ENCODE measurements at regions of chr6 and their contacts with region 1.

Region 1: DNA sequence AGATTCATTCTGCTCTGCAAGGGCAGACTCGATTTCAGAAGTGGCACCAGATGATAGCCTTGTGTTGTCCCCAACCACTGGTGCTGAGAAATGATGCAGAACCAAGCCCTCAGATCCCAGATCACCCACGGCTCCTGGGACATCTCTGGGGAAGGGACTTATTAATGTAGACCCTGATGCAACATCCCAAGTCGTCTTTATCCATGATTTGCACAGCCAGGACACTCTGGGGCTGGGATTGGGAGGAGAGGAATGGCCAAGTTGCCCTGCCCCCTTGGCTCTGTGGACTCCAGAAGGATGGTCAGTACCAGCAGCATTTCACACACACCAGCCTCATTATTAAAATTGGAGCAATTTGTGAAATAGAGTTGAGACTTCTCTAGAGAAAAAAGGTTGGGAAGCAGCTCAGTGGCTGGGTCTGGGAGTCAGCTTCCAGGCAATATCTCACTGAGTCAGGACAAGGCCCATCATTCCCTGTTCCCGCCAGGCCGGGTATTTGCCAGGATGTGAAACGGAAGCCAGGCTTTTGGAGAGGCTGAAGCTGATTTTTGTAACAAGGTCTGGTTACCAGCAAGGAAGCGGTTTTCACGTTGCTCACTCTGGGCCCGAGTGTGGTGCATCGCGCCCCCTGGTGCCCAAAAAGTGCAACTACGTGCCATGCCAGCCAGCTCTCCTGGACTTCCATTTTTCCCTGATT is 67.4 kb downstream of the ZBTB2 start:
- DNase-seq: peak; percentile 94
- H3K4me3 ChIP-seq: no peak overlapping the region
- H3K27ac ChIP-seq: peak overlapping the region; percentile 80
- H3K4me1 ChIP-seq: peaks cover 26% of the 10 kb centered on the region
- H3K27me3 ChIP-seq: no peaks in the 10 kb centered on the region
- CTCF ChIP-seq: peak; percentile 94 to 97
- POLR2A ChIP-seq: peak; percentile 28

Region 2: GRCh38 chr6:150813319-150813992 is 510.5 kb before region 1 on chr6:
- CTCF ChIA-PET with region 1: interaction called, 17 read pairs
- POLR2A ChIA-PET with region 1: no interaction called
- dilution Hi-C with region 1: no loop called
- intact Hi-C with region 1: no loop called
- DNase-seq: no peak
- H3K4me3 ChIP-seq: no peak overlapping the region
- H3K27ac ChIP-seq: peak overlapping the region; percentile 12
- H3K4me1 ChIP-seq: peaks cover 10% of the 10 kb centered on the region
- H3K27me3 ChIP-seq: no peaks in the 10 kb centered on the region
- CTCF ChIP-seq: no peak
- POLR2A ChIP-seq: no peak

Region 3: DNA sequence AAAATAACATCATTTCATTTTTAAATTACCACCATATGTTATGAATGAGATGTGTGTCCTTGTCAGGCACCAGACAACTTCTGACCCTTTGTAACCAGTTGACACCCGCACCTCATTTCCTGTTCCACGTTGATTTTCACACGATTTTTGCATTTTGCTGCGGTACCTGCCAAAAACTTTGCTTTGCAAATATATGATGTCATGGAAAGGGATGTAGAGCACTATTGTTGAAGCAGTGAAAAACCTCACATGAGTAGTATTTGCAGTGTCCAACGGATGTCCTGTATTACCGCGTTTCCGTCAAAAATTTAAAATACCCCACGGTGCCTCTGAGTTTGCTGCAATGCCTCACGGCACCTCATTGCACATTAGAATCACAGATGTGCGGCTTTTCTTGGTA is 342.8 kb before region 1 on chr6:
- CTCF ChIA-PET with region 1: interaction called, 19 read pairs
- POLR2A ChIA-PET with region 1: interaction called, 3 read pairs
- dilution Hi-C with region 1: no loop called
- intact Hi-C with region 1: loop called (anchors 1 kb)
- DNase-seq: peak; percentile 99
- H3K4me3 ChIP-seq: no peak overlapping the region
- H3K27ac ChIP-seq: peak overlapping the region; percentile 90
- H3K4me1 ChIP-seq: peaks cover 26% of the 10 kb centered on the region
- H3K27me3 ChIP-seq: no peaks in the 10 kb centered on the region
- CTCF ChIP-seq: no peak
- POLR2A ChIP-seq: no peak

Region 4: DNA sequence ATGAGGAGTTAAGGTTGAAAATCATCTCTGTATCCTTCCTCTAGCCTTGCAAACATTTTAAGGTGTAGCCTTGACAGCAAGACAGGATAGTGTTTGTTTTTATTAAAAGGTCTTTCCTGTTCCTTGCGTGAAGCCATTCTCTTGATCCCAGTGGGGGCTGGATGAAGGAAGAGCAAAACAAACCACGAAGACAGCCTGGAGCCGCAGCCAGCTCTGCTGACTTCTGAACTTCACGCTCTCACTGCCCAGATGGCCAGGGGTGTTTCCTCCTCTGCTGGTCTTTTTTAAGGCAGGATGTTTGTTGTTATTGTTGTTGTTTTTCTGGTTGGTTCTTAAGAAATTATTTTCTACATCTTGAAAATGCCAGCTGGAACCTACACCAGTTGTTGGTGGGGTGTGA is 302.0 kb before region 1 on chr6:
- CTCF ChIA-PET with region 1: interaction called, 284 read pairs
- POLR2A ChIA-PET with region 1: interaction called, 4 read pairs
- dilution Hi-C with region 1: no loop called
- intact Hi-C with region 1: no loop called
- DNase-seq: peak; percentile 68
- H3K4me3 ChIP-seq: no peak overlapping the region
- H3K27ac ChIP-seq: peak overlapping the region; percentile 74
- H3K4me1 ChIP-seq: peaks cover 47% of the 10 kb centered on the region
- H3K27me3 ChIP-seq: no peaks in the 10 kb centered on the region
- CTCF ChIP-seq: no peak
- POLR2A ChIP-seq: no peak

Region 5: DNA sequence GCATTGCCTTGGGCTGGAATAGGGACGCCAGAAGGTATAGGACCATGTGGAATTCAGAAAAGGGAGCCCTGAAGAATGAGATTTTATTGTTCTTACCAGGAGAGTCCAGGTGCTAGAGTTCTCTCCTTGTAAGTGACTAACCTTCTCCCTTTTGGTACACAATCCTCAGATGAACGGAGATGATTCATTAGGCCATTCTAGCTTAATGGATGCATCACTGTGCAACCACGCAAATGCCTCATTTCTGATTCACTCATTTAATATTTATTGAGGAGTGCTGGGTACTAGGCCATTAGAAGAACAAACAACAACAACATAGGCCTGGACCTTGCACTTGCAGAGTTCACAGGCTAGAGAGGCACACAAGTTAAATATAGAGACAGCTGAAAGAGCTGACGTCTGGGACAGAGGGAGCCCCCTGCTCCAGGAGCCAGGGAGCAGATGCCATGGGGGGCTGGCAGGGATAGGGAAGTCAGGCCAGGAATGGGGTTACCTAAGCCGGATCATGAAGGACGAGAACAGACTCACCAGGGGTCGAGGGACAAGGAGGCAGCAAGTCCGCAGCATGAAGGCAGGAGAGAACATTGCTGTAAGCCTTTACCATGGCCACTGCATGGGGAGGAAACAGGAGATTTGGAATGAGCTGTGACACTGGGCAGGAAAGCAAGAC is 263.7 kb before region 1 on chr6:
- CTCF ChIA-PET with region 1: interaction called, 34 read pairs
- POLR2A ChIA-PET with region 1: no interaction called
- dilution Hi-C with region 1: no loop called
- intact Hi-C with region 1: loop called (anchors 1 kb)
- DNase-seq: peak; percentile 90
- H3K4me3 ChIP-seq: no peak overlapping the region
- H3K27ac ChIP-seq: peak overlapping the region; percentile 95
- H3K4me1 ChIP-seq: peaks cover 55% of the 10 kb centered on the region
- H3K27me3 ChIP-seq: no peaks in the 10 kb centered on the region
- CTCF ChIP-seq: no peak
- POLR2A ChIP-seq: no peak

Region 6: GRCh38 chr6:151141685-151142084 is 182.3 kb before region 1 on chr6:
- CTCF ChIA-PET with region 1: no interaction called
- POLR2A ChIA-PET with region 1: no interaction called
- dilution Hi-C with region 1: no loop called
- intact Hi-C with region 1: loop called (anchors 2 kb)
- DNase-seq: peak; percentile 61
- H3K4me3 ChIP-seq: no peak overlapping the region
- H3K27ac ChIP-seq: peak overlapping the region; percentile 63
- H3K4me1 ChIP-seq: peaks cover 12% of the 10 kb centered on the region
- H3K27me3 ChIP-seq: no peaks in the 10 kb centered on the region
- CTCF ChIP-seq: no peak
- POLR2A ChIP-seq: no peak

Region 7: GRCh38 chr6:151285122-151285521 is 38.8 kb before region 1 on chr6:
- CTCF ChIA-PET with region 1: interaction called, 6 read pairs
- POLR2A ChIA-PET with region 1: no interaction called
- dilution Hi-C with region 1: no loop called
- intact Hi-C with region 1: loop called (anchors 1 kb)
- DNase-seq: peak; percentile 90
- H3K4me3 ChIP-seq: peak overlapping the region in 1 of 3 experiments; percentile 21
- H3K27ac ChIP-seq: peak overlapping the region; percentile 85
- H3K4me1 ChIP-seq: peaks cover 36% of the 10 kb centered on the region
- H3K27me3 ChIP-seq: no peaks in the 10 kb centered on the region
- CTCF ChIP-seq: no peak
- POLR2A ChIP-seq: no peak

Region 8: GRCh38 chr6:151359486-151359885 is 35.5 kb after region 1 on chr6:
- CTCF ChIA-PET with region 1: no interaction called
- POLR2A ChIA-PET with region 1: no interaction called
- dilution Hi-C with region 1: no loop called
- intact Hi-C with region 1: no loop called
- DNase-seq: no peak
- H3K4me3 ChIP-seq: no peak overlapping the region
- H3K27ac ChIP-seq: no peak overlapping the region
- H3K4me1 ChIP-seq: peaks cover 15% of the 10 kb centered on the region
- H3K27me3 ChIP-seq: no peaks in the 10 kb centered on the region
- CTCF ChIP-seq: no peak
- POLR2A ChIP-seq: no peak